Activated CD8-positive, alpha-beta T cell treated with anti-CD3 and anti-CD28 coated beads for 36 hours (primary cell): ENCODE measurements at regions of chr20 and their contacts with region 1.

Region 1: GRCh38 chr20:45300961-45301360 is 5.7 kb upstream of the RBPJL start:
- DNase-seq: peak; percentile 78
- ATAC-seq: peak; percentile 81
- H3K4me3 Mint-ChIP-seq: no peak overlapping the region
- H3K27ac Mint-ChIP-seq: no peak overlapping the region
- H3K4me1 Mint-ChIP-seq: peaks cover 24% of the 10 kb centered on the region
- H3K27me3 Mint-ChIP-seq: peaks cover 33% of the 10 kb centered on the region
- CTCF ChIP-seq: peak; percentile 47

Region 2: DNA sequence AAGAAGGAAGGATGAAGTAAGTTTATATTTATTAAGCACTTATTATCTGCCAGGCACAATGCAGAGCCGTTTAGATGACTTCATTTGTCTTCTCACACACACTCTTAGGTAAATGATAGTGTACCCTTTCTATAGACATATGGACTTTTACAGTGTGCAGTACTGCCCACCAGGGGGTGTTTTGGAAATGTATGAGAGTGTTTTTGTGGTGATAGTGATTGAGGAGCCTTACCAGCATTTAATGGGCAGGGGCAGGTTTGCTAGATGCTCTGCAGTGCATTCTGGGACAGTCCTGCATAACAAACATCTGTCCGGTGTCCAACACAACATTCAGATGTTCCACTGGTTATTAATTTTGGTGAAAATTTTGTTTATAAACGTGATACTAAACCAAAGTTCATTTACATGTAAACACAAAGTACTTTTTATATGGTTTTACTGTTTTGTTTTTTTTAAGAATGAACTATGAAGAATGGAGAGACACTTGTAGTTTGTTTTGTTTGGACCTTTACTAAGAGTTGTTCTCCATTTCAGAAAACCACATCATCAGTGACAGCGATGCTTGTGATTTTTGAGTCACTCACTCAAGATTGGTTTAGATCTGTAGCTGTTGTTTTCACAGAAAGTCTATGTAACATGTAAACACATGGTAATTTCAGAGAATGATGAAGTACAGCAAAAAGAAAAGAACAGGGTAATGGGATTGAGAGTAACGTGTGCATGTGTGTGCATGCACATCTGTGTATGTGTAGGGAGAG is 219.9 kb before region 1 on chr20:
- CTCF ChIA-PET with region 1: no interaction called
- POLR2A ChIA-PET with region 1: no interaction called
- intact Hi-C with region 1: no loop called
- DNase-seq: no peak
- ATAC-seq: peak; percentile 45
- H3K4me3 Mint-ChIP-seq: no peak overlapping the region
- H3K27ac Mint-ChIP-seq: peak overlapping the region; percentile 14
- H3K4me1 Mint-ChIP-seq: peaks cover 4% of the 10 kb centered on the region
- H3K27me3 Mint-ChIP-seq: no peaks in the 10 kb centered on the region
- CTCF ChIP-seq: peak; percentile 36

Region 3: GRCh38 chr20:45311589-45312211 is 10.7 kb after region 1 on chr20:
- CTCF ChIA-PET with region 1: interaction called, 40 read pairs
- POLR2A ChIA-PET with region 1: no interaction called
- intact Hi-C with region 1: no loop called
- DNase-seq: peak; percentile 74
- ATAC-seq: peak; percentile 80
- H3K4me3 Mint-ChIP-seq: no peak overlapping the region
- H3K27ac Mint-ChIP-seq: no peak overlapping the region
- H3K4me1 Mint-ChIP-seq: peaks cover 5% of the 10 kb centered on the region
- H3K27me3 Mint-ChIP-seq: peaks cover 57% of the 10 kb centered on the region
- CTCF ChIP-seq: peak; percentile 93